ENCODE measurements at regions of chr5 and their contacts with region 1.

Region 1: GRCh38 chr5:170183816-170184687 is 48.7 kb upstream of the C5orf58 start:
- DNase-seq: peak; percentile 31 to 87 (median 70)

Region 2: GRCh38 chr5:169695919-169696490 is 488.0 kb before region 1 on chr5:
- intact Hi-C with region 1: loop called (anchors 5 kb)
- DNase-seq: no peak

Region 3: GRCh38 chr5:170097934-170098333 is 86.1 kb before region 1 on chr5:
- intact Hi-C with region 1: loop called (anchors 2 kb)
- DNase-seq: peak in 23 of 42 donors; percentile 7 to 45 (median 24)

Measured in head of caudate nucleus (tissue), 42 donors.